Breast epithelium (tissue), 4 donors: ENCODE measurements at regions of chr3 and their contacts with region 1.

Region 1: DNA sequence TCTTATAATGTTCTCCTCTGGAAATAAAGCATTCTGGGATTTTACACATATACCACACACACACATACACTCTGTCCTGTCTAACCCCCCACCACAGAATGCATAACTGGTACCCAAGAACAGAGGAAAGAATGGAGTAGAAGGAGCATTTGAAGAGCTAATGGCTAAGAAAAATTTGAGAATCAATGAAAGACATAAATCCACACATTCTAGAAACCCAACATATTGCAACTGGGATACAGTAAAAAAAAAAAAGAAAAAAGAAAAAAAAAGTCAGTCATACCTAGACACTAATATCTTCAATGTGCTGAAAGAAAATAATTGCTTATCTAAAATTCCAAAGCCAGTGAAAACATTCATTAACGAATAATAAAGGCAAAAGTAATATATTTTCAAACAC is 20.9 kb downstream of the CEP70 start:
- DNase-seq: no peak
- H3K4me3 ChIP-seq: no peak overlapping the region
- H3K27ac ChIP-seq: no peak overlapping the region
- H3K4me1 ChIP-seq: no peaks in the 10 kb centered on the region
- H3K27me3 ChIP-seq: no peaks in the 10 kb centered on the region
- CTCF ChIP-seq: no peak
- POLR2A ChIP-seq: no peak

Region 2: GRCh38 chr3:138560501-138560900 is 12.6 kb before region 1 on chr3:
- intact Hi-C with region 1: no loop called
- DNase-seq: no peak
- H3K4me3 ChIP-seq: no peak overlapping the region
- H3K27ac ChIP-seq: no peak overlapping the region
- H3K4me1 ChIP-seq: no peaks in the 10 kb centered on the region
- H3K27me3 ChIP-seq: no peaks in the 10 kb centered on the region
- CTCF ChIP-seq: no peak
- POLR2A ChIP-seq: no peak

Region 3: DNA sequence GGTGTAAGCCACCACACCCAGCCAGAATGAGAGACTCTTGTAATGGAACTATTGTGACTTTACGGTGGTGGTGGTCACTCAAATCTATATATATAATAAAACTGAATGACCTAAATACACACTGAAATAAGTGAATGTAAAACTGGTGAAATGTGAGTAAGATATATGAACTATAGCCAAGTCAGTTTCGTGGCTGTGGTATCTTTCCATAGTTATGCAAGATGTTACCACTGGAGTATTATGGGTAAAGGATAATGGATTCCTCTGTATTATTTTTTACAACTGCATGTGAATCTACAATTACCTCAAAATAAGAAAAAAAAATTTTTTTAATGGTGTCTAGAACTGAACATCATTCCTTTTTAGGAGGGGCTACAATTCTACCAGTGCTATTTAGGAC is 239.7 kb after region 1 on chr3:
- intact Hi-C with region 1: loop called (anchors 5 kb)
- DNase-seq: no peak
- H3K4me3 ChIP-seq: no peak overlapping the region
- H3K27ac ChIP-seq: no peak overlapping the region
- H3K4me1 ChIP-seq: no peaks in the 10 kb centered on the region
- H3K27me3 ChIP-seq: no peaks in the 10 kb centered on the region
- CTCF ChIP-seq: no peak
- POLR2A ChIP-seq: no peak

Region 4: GRCh38 chr3:138842483-138843188 is 269.5 kb after region 1 on chr3:
- intact Hi-C with region 1: no loop called
- DNase-seq: no peak
- H3K4me3 ChIP-seq: no peak overlapping the region
- H3K27ac ChIP-seq: no peak overlapping the region
- H3K4me1 ChIP-seq: no peaks in the 10 kb centered on the region
- H3K27me3 ChIP-seq: no peaks in the 10 kb centered on the region
- CTCF ChIP-seq: no peak
- POLR2A ChIP-seq: no peak